Activated B cell treated with CpG ODN at 0.5 μM for 24 hours (primary cell): ENCODE measurements at regions of chr6 and their contacts with region 1.

Region 1: GRCh38 chr6:150702675-150703074 is 103.0 kb downstream of the PLEKHG1 start:
- DNase-seq: no peak
- ATAC-seq: peak; percentile 74
- H3K4me3 Mint-ChIP-seq: peak overlapping the region; percentile 11
- H3K27ac Mint-ChIP-seq: peak overlapping the region; percentile 86
- H3K4me1 Mint-ChIP-seq: peaks cover 91% of the 10 kb centered on the region
- H3K27me3 Mint-ChIP-seq: no peaks in the 10 kb centered on the region
- CTCF ChIP-seq: no peak

Region 2: DNA sequence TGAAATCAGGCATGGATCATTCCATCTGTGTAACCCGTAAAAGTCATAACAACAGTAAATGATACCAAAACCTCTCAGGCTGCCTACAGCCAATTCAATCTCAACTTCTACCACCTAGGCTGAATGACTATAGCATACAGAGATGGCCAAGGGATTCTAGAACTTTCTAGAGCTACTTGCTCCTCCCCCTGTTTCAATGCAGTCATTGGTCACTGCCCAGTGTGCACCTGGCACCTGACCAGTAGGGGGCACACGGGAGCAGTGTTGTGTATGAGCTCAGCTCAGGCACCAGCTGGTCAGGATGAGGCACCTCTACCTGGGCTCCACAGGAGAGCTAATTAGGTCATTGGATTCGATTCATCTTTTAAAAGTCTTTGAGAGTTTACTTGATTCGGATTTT is 16.8 kb before region 1 on chr6:
- CTCF ChIA-PET with region 1: interaction called, 10 read pairs
- POLR2A ChIA-PET with region 1: interaction called, 8 read pairs
- intact Hi-C with region 1: loop called (anchors 1 kb)
- DNase-seq: no peak
- ATAC-seq: peak; percentile 32
- H3K4me3 Mint-ChIP-seq: no peak overlapping the region
- H3K27ac Mint-ChIP-seq: peak overlapping the region; percentile 85
- H3K4me1 Mint-ChIP-seq: peaks cover 95% of the 10 kb centered on the region
- H3K27me3 Mint-ChIP-seq: no peaks in the 10 kb centered on the region
- CTCF ChIP-seq: no peak

Region 3: DNA sequence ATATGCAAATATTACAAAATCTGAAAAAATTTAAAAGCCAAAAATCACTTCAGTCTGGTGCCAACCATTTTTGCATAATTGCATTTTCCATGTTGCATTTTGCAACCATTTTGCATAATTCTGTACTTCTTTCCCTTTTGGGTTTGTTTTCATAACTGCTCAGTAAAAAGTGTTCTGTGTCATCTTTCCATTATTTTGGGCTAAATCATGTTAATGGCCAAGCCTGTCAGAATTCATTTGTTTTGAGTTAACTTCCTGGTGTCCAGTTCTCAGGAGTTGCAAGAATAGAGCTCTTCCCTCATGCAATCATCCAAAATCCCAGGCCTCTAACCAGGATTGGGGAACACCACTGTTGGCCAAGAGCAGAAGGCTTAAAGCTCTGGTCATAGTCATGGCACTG is 296.4 kb after region 1 on chr6:
- CTCF ChIA-PET with region 1: no interaction called
- POLR2A ChIA-PET with region 1: no interaction called
- intact Hi-C with region 1: no loop called
- DNase-seq: no peak
- ATAC-seq: no peak
- H3K4me3 Mint-ChIP-seq: no peak overlapping the region
- H3K27ac Mint-ChIP-seq: no peak overlapping the region
- H3K4me1 Mint-ChIP-seq: peaks cover 8% of the 10 kb centered on the region
- H3K27me3 Mint-ChIP-seq: no peaks in the 10 kb centered on the region
- CTCF ChIP-seq: no peak